ENCODE measurements at regions of chr3 and their contacts with region 1.

Region 1: GRCh38 chr3:187738331-187739093 is 6.8 kb downstream of the BCL6 start:
- DNase-seq: peak; percentile 54 to 97
- H3K4me3 ChIP-seq: peak overlapping the region; percentile 73 to 75
- H3K27ac ChIP-seq: peak overlapping the region; percentile 98 to 99
- H3K4me1 ChIP-seq: peaks cover 6 to 27% of the 10 kb centered on the region in 2 donors
- H3K27me3 ChIP-seq: no peaks in the 10 kb centered on the region
- CTCF ChIP-seq: peak; percentile 66 to 87 (median 75)

Region 2: DNA sequence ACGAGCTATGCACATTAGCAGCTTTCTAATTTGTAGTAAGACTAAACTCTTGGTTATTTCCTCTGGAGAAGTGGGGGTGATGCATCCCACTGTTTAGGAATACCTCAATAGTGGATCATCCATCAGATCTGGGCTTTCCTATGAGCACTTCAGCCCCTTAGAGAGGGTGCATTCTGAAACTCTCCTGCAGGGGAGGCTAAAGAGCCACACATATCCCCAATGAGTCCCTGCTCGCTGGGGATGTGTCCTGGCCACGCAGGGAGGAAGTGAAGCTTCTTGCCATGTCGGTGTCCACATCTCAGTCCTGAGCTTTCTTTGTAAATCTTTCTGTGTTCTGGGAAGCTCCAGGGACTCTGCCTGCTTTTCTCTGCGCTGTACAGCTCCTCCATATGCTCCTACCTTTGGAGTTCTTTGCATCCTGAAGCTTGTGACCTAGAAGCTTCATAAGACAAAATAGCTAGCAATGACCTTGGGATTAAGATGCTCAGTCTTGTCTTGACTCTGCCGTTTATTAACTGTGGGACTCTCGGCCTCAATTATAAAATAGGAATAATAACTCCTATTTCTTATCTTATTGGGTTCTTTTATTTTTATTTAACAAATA is 418.7 kb before region 1 on chr3:
- intact Hi-C with region 1: no loop called
- DNase-seq: peak in 1 of 2 donors; percentile 82
- H3K4me3 ChIP-seq: peak overlapping the region in 1 of 2 donors; percentile 41
- H3K27ac ChIP-seq: no peak overlapping the region
- H3K4me1 ChIP-seq: peaks cover 6 to 10% of the 10 kb centered on the region in 2 donors
- H3K27me3 ChIP-seq: no peaks in the 10 kb centered on the region
- CTCF ChIP-seq: peak; percentile 80 to 91 (median 82)

Region 3: DNA sequence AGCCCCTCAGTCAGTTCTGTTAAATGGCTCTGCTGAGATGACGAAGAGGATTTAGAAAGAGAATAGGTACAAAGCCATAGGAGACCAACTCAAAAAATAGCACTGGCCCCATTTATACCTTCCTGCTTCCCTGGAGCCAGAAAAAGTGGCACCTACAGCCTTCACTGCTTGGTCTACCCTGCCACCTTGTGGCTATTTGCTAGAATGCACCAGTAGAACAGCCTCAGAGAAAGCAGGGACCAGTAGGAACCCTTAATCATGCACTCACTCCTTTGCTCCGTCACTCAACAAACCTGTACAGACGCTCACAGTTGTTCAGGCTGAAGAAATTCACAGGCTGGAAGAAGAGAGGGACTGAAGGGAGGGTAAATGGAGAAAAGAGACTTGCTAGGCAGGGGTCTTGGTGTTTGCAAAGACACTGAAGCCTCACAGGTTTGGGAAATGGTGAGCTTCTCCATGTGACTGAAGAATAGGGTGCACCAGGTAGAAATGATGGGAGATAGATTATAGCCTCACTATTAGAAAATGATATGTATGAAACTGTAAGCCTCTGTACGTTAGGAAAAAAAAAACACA is 24.0 kb before region 1 on chr3:
- intact Hi-C with region 1: no loop called
- DNase-seq: peak in 1 of 2 donors; percentile 88
- H3K4me3 ChIP-seq: no peak overlapping the region
- H3K27ac ChIP-seq: no peak overlapping the region
- H3K4me1 ChIP-seq: no peaks in the 10 kb centered on the region
- H3K27me3 ChIP-seq: no peaks in the 10 kb centered on the region
- CTCF ChIP-seq: peak; percentile 89 to 94 (median 94)

Region 4: DNA sequence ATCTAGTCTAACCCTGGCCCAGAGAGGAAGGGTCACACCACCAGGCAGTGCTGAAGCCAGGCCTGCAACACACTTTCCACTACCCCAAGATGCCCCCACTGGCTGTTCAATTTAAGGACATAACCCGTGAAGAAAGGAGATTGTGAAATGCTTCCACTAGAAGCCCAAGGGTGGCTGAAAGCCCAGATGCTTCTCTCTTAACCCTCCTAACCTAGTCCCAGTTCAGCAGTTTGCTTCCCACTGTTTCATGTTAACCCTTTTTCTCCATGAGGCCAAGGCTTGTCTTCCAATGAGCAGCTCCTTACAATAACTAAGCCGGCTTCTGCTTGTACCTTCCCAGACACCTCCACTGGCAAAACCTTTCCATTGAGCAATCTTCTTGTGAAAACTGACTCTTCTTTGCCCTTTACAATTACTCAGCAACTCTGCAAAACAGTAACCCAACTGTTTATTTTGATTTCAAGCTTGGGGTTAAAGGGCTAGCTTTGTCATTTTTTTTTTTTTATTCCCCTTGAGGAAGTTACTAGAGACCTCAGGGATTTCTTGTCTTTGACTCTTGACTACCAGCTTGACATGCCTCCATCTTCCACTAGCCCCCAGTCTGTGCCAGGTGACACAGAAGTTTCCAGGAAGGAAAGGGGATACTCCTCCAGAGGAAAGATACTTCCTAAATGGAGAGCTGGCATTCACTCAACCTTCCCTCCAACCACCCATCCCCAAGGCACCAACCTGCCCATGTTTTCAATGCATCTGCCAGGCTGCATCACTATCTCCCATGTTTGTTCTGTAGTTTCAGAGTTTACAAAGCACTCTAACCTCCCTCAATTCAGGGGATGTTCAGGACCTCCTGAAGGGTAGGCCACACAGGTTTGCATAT is 216.8 kb after region 1 on chr3:
- intact Hi-C with region 1: no loop called
- DNase-seq: no peak
- H3K4me3 ChIP-seq: no peak overlapping the region
- H3K27ac ChIP-seq: no peak overlapping the region
- H3K4me1 ChIP-seq: no peaks in the 10 kb centered on the region
- H3K27me3 ChIP-seq: no peaks in the 10 kb centered on the region
- CTCF ChIP-seq: no peak

Region 5: GRCh38 chr3:188212308-188212969 is 473.9 kb after region 1 on chr3:
- intact Hi-C with region 1: loop called (anchors 1 kb)
- DNase-seq: peak in 1 of 2 donors; percentile 82
- H3K4me3 ChIP-seq: peak overlapping the region; percentile 49 to 63
- H3K27ac ChIP-seq: peak overlapping the region; percentile 92 to 96
- H3K4me1 ChIP-seq: peaks cover 17 to 33% of the 10 kb centered on the region in 2 donors
- H3K27me3 ChIP-seq: no peaks in the 10 kb centered on the region
- CTCF ChIP-seq: no peak

Region 6: DNA sequence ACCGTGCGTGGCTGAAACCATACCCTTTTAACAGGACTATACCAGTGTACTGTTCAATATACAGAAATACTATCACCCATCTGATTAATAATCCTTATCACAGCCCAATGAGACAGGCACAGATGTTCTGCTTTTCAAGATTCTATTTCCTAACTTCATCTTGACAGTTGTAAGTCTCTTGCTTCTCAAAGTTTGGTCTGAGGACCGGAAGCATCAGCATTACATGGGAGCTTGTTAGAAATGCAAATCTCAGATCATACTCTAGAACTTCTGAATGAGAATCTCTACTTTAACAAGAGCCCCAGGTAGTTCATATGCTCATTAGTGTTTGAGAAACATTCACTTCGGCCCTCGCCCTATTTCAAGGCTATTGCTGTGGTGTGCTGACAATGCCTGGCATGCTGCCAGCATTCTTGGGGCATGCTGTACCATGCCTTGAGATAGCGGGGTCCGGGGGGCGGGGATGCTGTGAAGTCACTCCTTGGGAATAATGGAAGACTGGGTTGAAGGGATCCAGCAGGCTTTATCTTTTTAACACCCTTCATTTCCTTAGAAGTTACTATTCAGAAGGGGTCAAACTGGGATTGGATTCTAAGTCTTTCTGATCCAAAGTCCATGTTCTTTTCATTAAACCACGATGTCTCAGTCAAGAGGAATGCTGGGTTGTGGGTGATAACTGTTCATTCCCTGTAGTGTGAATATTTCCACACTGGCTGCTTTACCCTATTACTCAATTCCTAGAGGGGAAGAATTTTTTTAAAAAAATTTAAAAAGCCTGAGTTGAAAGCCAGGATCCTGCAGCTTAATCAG is 610.1 kb after region 1 on chr3:
- intact Hi-C with region 1: loop called (anchors 5 kb)
- DNase-seq: peak in 1 of 2 donors; percentile 87
- H3K4me3 ChIP-seq: peak overlapping the region in 1 of 2 donors; percentile 16
- H3K27ac ChIP-seq: peak overlapping the region; percentile 45 to 64
- H3K4me1 ChIP-seq: peaks cover 20 to 69% of the 10 kb centered on the region in 2 donors
- H3K27me3 ChIP-seq: no peaks in the 10 kb centered on the region
- CTCF ChIP-seq: no peak

Region 7: DNA sequence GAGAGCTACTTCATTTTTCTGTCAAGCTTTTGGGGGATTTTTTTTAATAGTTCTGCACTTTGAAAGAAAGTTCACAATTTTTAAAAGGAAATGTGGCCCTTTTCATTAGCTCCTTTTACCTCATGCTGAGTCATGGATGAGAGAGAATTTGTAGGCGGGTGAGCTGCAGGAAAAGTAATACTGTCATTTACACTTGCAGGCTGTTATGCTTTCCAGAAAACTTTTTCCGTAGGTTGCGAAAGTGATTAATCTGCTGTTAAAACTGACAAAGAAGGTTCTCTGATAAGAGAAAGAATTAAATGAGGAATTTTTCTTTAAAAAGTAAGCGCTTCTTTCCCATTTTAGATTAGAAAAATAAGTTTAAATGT is 845.6 kb after region 1 on chr3:
- intact Hi-C with region 1: loop called (anchors 5 kb)
- DNase-seq: no peak
- H3K4me3 ChIP-seq: no peak overlapping the region
- H3K27ac ChIP-seq: peak overlapping the region; percentile 85
- H3K4me1 ChIP-seq: peaks cover 14 to 47% of the 10 kb centered on the region in 2 donors
- H3K27me3 ChIP-seq: no peaks in the 10 kb centered on the region
- CTCF ChIP-seq: no peak

Region 8: DNA sequence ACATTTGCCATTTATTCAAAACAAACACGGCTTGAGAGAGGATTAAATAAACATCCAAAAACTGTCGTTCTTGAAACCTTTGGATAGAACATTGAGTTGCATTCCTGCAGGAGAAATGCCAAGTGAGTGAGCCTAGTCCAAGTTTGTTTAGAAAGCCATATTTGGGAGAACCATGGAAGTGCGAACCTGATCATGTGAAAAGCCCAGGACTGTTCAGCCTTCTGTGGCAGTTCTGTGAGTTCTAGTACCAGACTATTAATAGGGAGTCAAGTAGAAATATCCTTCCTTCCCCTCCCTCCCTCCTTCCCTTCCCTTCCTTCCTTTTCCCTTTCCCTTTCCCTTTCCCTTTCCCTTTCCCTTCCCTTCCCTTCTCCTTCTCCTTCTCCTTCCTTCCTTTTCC is 885.9 kb after region 1 on chr3:
- intact Hi-C with region 1: loop called (anchors 5 kb)
- DNase-seq: peak in 1 of 2 donors; percentile 88
- H3K4me3 ChIP-seq: no peak overlapping the region
- H3K27ac ChIP-seq: peak overlapping the region; percentile 74 to 81
- H3K4me1 ChIP-seq: peaks cover 0 to 40% of the 10 kb centered on the region in 2 donors
- H3K27me3 ChIP-seq: no peaks in the 10 kb centered on the region
- CTCF ChIP-seq: no peak

Region 9: GRCh38 chr3:188889054-188889491 is 1150.6 kb after region 1 on chr3:
- intact Hi-C with region 1: loop called (anchors 5 kb)
- DNase-seq: peak in 1 of 2 donors; percentile 74
- H3K4me3 ChIP-seq: no peak overlapping the region
- H3K27ac ChIP-seq: peak overlapping the region; percentile 56 to 77
- H3K4me1 ChIP-seq: peaks cover 4 to 18% of the 10 kb centered on the region in 2 donors
- H3K27me3 ChIP-seq: no peaks in the 10 kb centered on the region
- CTCF ChIP-seq: no peak

Region 10: GRCh38 chr3:189148081-189148507 is 1409.6 kb after region 1 on chr3:
- intact Hi-C with region 1: loop called (anchors 1 kb)
- DNase-seq: peak in 1 of 2 donors; percentile 76
- H3K4me3 ChIP-seq: no peak overlapping the region
- H3K27ac ChIP-seq: no peak overlapping the region
- H3K4me1 ChIP-seq: no peaks in the 10 kb centered on the region
- H3K27me3 ChIP-seq: no peaks in the 10 kb centered on the region
- CTCF ChIP-seq: peak; percentile 68 to 73 (median 69)

Measured in ascending aorta (tissue), 2 donors.